Right cardiac atrium (tissue), 5 donors: ENCODE measurements at regions of chr3 and their contacts with region 1.

Region 1: DNA sequence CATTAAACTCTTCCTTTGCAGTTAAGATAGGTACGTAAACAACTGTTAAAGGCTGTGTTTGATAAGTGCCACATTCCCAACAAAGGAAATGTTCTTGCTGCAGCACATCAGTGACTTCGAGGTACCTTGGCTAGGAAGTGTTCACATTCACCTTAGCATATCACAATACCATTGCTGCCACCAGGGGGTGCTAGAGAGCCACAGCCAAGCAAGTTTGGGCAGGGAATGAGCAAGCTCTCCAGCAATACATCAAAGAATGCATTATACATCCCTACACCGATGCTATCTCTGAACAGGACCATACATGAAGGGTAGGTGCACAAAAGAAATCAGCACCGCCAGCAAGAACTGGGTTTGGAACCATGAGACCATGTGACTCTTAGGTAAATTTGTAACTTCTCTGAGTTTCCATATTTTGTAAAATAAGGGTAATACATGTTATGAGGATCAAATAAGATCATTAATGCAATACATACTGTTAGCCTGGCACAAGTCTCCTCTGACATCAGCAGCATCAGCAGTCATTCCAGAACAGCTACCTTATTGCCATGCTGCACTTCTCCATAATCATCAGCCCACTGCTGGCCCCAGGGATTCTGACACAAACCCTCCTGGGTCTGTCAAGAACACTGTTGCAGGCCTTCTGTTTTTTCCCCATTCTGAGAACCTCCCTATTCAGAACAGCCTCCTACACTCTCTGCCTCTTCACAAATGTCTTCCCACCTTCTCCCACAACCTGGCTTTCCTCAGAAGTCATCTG is 37.6 kb downstream of the RYK start:
- DNase-seq: peak; percentile 75 to 90 (median 87)
- ATAC-seq: peak; percentile 77 to 84
- H3K4me3 ChIP-seq: no peak overlapping the region
- H3K27ac ChIP-seq: no peak overlapping the region
- H3K4me1 ChIP-seq: peaks cover 4% of the 10 kb centered on the region
- H3K27me3 ChIP-seq: no peaks in the 10 kb centered on the region

Region 2: GRCh38 chr3:133573054-133573628 is 639.9 kb before region 1 on chr3:
- intact Hi-C with region 1: no loop called
- DNase-seq: peak; percentile 100
- ATAC-seq: peak; percentile 95 to 97
- H3K4me3 ChIP-seq: peak overlapping the region; percentile 95
- H3K27ac ChIP-seq: peak overlapping the region; percentile 80
- H3K4me1 ChIP-seq: peaks cover 6% of the 10 kb centered on the region
- H3K27me3 ChIP-seq: no peaks in the 10 kb centered on the region

Region 3: DNA sequence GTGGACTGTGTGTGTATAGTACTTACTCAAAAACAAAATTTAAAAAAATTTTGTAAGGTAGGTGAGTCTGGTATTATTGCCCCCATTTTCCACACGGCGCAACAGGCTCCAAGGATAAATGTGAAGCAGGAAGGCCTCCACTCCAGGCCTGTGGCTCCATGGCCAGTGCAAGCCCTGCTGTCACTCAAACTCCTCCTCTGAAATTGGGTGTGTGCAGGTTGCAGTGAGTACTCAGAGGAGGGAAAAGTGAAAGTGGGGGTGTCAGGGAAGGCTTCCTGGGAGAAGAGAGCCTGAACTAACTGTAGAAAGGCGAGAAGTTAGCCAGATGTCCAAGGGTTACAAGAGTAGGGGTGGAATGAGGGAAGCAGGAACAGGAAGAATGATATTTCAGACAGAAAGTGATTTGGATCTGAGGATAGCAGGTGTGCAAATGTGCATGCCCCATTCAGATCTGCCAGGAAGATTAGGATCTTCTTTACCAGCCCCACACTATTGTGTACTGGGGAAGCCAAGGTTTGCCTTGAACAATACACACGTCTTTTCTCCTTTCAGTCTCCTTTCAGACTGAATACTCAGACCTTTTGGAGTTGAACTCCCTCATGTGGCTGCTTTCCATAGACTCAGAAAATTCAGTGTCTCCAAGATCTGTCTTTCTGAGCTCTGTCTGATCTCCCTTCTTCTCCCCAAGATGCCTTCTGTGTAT is 86.2 kb after region 1 on chr3:
- intact Hi-C with region 1: loop called (anchors 2 to 5 kb)
- DNase-seq: no peak
- ATAC-seq: peak; percentile 60 to 79
- H3K4me3 ChIP-seq: no peak overlapping the region
- H3K27ac ChIP-seq: peak overlapping the region; percentile 46
- H3K4me1 ChIP-seq: no peaks in the 10 kb centered on the region
- H3K27me3 ChIP-seq: no peaks in the 10 kb centered on the region

Region 4: GRCh38 chr3:134406331-134407238 is 193.5 kb after region 1 on chr3:
- intact Hi-C with region 1: no loop called
- DNase-seq: peak; percentile 51 to 82 (median 77)
- ATAC-seq: peak; percentile 75 to 78
- H3K4me3 ChIP-seq: peak overlapping the region; percentile 36
- H3K27ac ChIP-seq: no peak overlapping the region
- H3K4me1 ChIP-seq: no peaks in the 10 kb centered on the region
- H3K27me3 ChIP-seq: no peaks in the 10 kb centered on the region

Region 5: GRCh38 chr3:134485718-134486576 is 272.9 kb after region 1 on chr3 and contains the starts of genes ANAPC13 and CEP63:
- intact Hi-C with region 1: loop called in 2 of 4 experiments (anchors 10 kb)
- DNase-seq: peak; percentile 94 to 96 (median 96)
- ATAC-seq: peak; percentile 94 to 95
- H3K4me3 ChIP-seq: peak within 1 kb of the TSS; percentile 86
- H3K27ac ChIP-seq: peak within 1 kb of the TSS; percentile 97
- H3K4me1 ChIP-seq: no peaks in the 10 kb centered on the region
- H3K27me3 ChIP-seq: no peaks in the 10 kb centered on the region
- total RNA-seq, gene ANAPC13: 75.6 to 95.8 (median 81.3) TPM
- total RNA-seq, gene CEP63: 31.3 to 41.6 (median 39.4) TPM